ENCODE measurements at regions of chr10 and their contacts with region 1.

Region 1: DNA sequence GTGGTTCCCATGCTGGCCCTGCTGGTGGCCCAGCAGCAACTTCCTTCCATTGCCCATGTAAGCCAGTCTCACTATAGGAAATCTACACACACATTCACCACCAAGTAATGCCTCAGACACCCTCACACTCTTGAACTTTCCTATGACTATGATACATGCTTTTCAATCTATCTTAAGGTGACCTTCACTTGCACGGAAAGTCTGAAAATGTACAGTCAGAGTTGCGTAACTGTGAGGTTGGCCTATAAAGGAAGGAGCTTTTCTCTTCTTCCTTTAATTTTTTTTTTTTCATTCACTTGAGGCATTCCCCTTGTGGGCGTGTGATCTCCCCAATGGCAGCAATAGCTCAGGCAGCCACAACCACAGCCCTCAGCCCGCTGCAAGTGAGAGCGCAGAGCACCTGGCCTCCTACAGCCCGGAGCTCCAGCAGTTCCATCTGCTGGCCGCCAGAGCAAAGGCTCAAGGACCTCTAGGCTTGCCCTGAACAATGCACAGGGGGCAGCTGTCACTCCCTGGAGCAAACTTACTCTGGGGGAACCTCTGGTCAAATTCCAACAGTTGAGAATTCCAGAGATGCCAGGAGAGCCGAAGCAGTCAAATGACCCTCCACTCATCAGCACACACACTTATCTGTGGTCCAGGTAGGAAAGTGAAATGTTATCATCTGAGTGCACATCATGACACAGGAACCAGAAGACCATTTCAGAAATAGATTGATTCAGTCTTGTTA is 123.1 kb upstream of the ADO start:
- DNase-seq: peak; percentile 92
- H3K4me3 Mint-ChIP-seq: peak overlapping the region; percentile 31
- H3K27ac Mint-ChIP-seq: peak overlapping the region; percentile 72
- H3K4me1 Mint-ChIP-seq: peaks cover 48% of the 10 kb centered on the region
- H3K27me3 Mint-ChIP-seq: peaks cover 1% of the 10 kb centered on the region

Region 2: GRCh38 chr10:62637249-62638061 is 43.9 kb before region 1 on chr10:
- intact Hi-C with region 1: loop called (anchors 1 kb)
- DNase-seq: peak; percentile 92
- H3K4me3 Mint-ChIP-seq: no peak overlapping the region
- H3K27ac Mint-ChIP-seq: no peak overlapping the region
- H3K4me1 Mint-ChIP-seq: peaks cover 22% of the 10 kb centered on the region
- H3K27me3 Mint-ChIP-seq: no peaks in the 10 kb centered on the region

Region 3: DNA sequence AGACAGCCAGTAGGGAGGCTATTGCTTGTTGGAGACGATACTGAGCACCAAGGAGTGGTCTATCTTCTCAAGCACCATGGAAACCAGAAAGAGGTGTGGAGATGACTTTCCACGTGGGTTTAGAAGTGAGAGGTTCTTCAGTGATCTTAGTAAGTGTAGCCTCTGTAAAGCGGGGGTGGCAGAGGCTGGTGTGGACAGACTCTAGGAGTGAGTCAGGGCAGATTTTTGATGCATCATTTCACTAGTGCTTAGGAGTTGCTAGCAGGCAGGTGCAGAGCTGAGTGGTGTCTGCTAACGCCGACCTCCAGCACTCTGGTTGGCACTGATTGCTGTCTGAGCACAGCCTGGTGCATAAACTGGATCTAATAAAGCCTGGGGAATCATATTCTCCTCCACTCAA is 44.8 kb after region 1 on chr10:
- intact Hi-C with region 1: loop called (anchors 1 kb)
- DNase-seq: peak; percentile 68
- H3K4me3 Mint-ChIP-seq: peak overlapping the region; percentile 20
- H3K27ac Mint-ChIP-seq: peak overlapping the region; percentile 76
- H3K4me1 Mint-ChIP-seq: peaks cover 51% of the 10 kb centered on the region
- H3K27me3 Mint-ChIP-seq: peaks cover 1% of the 10 kb centered on the region

Region 4: GRCh38 chr10:62804356-62805230 is 123.2 kb after region 1 on chr10 and contains the start of gene ADO:
- intact Hi-C with region 1: loop called (anchors 1 kb)
- DNase-seq: peak; percentile 93
- H3K4me3 Mint-ChIP-seq: peak within 1 kb of the TSS; percentile 99
- H3K27ac Mint-ChIP-seq: peak within 1 kb of the TSS; percentile 100
- H3K4me1 Mint-ChIP-seq: peaks cover 33% of the 10 kb centered on the region
- H3K27me3 Mint-ChIP-seq: peaks cover 13% of the 10 kb centered on the region
- total RNA-seq, gene ADO: 43.6 and 43.8 TPM in 2 replicates

Region 5: DNA sequence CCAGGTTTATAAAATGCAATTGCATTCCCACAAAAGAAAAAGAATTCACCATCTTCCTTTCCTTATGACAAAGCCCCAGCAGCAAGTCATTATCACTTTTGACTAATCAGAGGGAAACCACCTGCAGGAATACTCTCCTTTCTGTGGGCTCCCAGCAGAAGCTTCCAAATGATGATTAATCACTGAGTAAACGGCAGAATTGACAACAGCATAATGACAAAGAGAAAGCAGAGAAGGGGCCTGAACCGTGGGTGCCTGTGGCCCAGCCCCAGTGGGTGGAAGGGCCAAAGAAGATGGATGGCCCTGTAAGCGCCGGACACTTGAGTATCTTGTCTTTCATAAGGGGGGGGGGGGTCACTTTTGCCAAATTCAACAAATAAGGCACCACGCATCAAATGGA is 299.3 kb after region 1 on chr10:
- intact Hi-C with region 1: loop called (anchors 2 kb)
- DNase-seq: no peak
- H3K4me3 Mint-ChIP-seq: peak overlapping the region; percentile 41
- H3K27ac Mint-ChIP-seq: peak overlapping the region; percentile 94
- H3K4me1 Mint-ChIP-seq: peaks cover 30% of the 10 kb centered on the region
- H3K27me3 Mint-ChIP-seq: peaks cover 2% of the 10 kb centered on the region

Measured in activated CD4-positive, alpha-beta T cell treated with anti-CD3 and anti-CD28 coated beads, Interleukin-2, amount 10 ng/mL, durations not matched to agents 24 days and 14 days (primary cell).